AG04450 (cell line): ENCODE measurements at regions of chr18 and their contacts with region 1.

Region 1: DNA sequence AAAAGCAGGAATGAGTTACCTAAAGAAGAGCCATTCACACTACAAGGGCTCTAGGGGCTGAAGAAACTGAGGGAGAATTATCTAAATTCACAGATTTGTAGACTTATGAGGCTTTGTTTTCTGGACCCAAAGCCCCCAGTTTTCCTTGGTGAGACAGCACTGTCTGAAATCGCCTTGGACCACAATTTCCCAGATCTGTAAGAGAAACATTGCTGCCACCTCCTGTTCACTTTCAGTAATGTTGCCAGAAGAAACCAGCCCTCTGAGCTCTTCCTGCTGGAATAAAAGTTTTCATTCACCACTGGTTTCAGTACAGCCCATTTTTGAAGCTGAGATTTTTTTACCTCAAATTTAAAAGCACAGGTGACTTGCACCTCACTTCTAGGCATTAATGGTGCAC is 169.2 kb downstream of the CDH20 start:
- DNase-seq: peak; percentile 32
- H3K4me3 ChIP-seq: no peak overlapping the region
- H3K27ac ChIP-seq: no peak overlapping the region
- H3K27me3 ChIP-seq: no peaks in the 10 kb centered on the region
- CTCF ChIP-seq: peak; percentile 77

Region 2: GRCh38 chr18:60684843-60685513 is 817.5 kb before region 1 on chr18:
- CTCF ChIA-PET with region 1: interaction called, 23 read pairs
- POLR2A ChIA-PET with region 1: no interaction called
- DNase-seq: no peak
- H3K4me3 ChIP-seq: no peak overlapping the region
- H3K27ac ChIP-seq: no peak overlapping the region
- H3K27me3 ChIP-seq: no peaks in the 10 kb centered on the region
- CTCF ChIP-seq: peak; percentile 58

Region 3: DNA sequence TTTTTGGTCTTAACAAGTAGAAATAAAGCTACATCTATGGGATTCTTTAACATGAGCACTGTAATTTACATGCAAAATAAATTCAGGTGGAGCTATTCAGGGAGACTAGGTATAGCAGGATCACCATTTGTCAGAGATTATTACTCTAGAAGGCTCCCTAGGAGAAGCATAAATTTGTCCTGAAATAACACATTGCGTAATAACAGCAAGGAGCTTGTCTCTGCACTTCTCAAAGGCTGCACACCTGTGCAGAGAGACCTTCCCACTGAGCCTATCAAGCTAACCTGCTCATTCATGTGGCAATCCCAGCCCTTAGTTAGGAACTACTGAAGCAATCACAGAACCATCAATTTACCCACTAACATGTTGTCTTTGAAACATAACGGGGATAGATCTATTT is 692.5 kb before region 1 on chr18:
- CTCF ChIA-PET with region 1: interaction called, 13 read pairs
- POLR2A ChIA-PET with region 1: no interaction called
- DNase-seq: no peak
- H3K4me3 ChIP-seq: no peak overlapping the region
- H3K27ac ChIP-seq: no peak overlapping the region
- H3K27me3 ChIP-seq: no peaks in the 10 kb centered on the region
- CTCF ChIP-seq: no peak

Region 4: GRCh38 chr18:61322265-61322873 is 180.1 kb before region 1 on chr18:
- CTCF ChIA-PET with region 1: interaction called, 268 read pairs
- POLR2A ChIA-PET with region 1: interaction called, 4 read pairs
- DNase-seq: peak; percentile 8
- H3K4me3 ChIP-seq: no peak overlapping the region
- H3K27ac ChIP-seq: no peak overlapping the region
- H3K27me3 ChIP-seq: no peaks in the 10 kb centered on the region
- CTCF ChIP-seq: peak; percentile 98

Region 5: DNA sequence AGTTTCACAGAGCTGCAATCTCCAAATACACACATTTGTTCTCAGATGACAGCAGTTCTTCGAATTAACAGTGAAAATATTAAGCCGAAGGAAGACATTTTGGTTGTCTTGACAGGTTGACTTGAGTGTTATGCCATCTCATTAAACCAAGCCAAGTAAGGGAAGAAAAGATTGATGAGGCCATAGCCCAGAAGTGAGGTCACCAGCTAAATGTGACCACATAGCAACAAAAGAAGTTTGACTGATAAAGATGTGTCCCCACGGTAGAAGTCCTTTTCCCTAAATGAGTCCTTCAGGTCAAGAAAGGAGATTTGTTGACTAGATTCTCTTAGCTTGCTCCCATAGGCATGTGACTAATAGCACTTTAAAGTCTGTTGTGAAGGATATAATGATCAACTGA is 13.1 kb before region 1 on chr18:
- CTCF ChIA-PET with region 1: interaction called, 27 read pairs
- POLR2A ChIA-PET with region 1: no interaction called
- DNase-seq: no peak
- H3K4me3 ChIP-seq: no peak overlapping the region
- H3K27ac ChIP-seq: no peak overlapping the region
- H3K27me3 ChIP-seq: peaks cover 17% of the 10 kb centered on the region
- CTCF ChIP-seq: no peak

Region 6: GRCh38 chr18:62131301-62131909 is 628.9 kb after region 1 on chr18:
- CTCF ChIA-PET with region 1: interaction called, 37 read pairs
- POLR2A ChIA-PET with region 1: no interaction called
- DNase-seq: no peak
- H3K4me3 ChIP-seq: no peak overlapping the region
- H3K27ac ChIP-seq: no peak overlapping the region
- H3K27me3 ChIP-seq: no peaks in the 10 kb centered on the region
- CTCF ChIP-seq: peak; percentile 97